ENCODE measurements at regions of chr7 and their contacts with region 1.

Region 1: DNA sequence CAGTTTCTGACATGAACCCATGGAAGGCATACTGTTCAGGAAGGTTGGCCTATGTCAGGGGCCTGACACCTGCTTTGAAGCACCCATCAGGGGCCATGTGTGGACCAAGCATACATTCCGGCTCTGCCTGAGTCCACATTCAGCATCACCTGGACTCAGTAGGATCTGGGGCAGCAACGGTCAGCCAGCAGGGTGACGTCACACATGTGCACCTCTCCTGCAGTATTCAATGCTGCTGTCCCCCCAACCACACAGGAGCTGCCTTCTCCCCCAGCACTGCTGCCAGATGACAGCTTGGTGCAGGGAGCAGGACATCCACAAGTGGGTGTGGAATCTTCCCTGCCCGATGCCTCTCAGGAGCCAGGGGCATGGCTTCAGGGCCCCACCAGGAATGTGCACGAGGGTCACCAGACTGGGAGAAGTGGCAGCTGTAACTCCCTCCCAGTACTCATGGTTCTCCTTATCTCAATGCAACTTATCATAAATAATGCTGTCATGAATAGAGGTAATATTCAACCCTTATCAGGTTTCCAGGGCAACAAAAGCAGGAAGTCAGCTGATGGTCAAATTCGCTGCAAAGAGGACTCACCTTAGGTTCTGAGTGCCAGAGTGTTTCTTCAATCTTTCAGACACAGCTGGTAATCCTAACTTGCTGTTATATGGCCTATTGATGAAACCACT is 292.9 kb downstream of the PAXIP1 start:
- DNase-seq: no peak
- ATAC-seq: no peak
- H3K4me3 Mint-ChIP-seq: no peak overlapping the region
- H3K27ac Mint-ChIP-seq: no peak overlapping the region
- H3K4me1 Mint-ChIP-seq: no peaks in the 10 kb centered on the region
- H3K27me3 Mint-ChIP-seq: no peaks in the 10 kb centered on the region

Region 2: DNA sequence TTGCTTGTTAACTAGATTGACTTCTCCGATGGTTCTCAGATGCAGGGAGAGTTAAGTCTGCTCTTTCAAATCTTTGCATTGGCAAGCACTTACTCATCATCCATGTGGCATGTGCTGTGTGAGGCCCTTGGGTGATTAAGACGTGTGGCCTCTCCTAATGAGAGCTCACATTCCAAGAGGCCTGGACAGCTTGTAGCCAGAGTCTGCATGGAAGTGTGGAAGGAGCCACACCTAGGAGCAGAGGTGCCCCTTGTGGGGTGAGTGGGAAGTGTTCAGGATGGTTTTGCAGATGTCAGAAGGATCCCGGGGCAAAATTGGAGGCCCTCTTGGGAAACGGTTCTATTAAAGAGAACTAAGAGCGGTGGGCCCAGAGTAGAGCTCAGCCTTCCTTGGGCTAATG is 67.0 kb after region 1 on chr7:
- CTCF ChIA-PET with region 1: no interaction called
- POLR2A ChIA-PET with region 1: no interaction called
- intact Hi-C with region 1: no loop called
- DNase-seq: no peak
- ATAC-seq: no peak
- H3K4me3 Mint-ChIP-seq: no peak overlapping the region
- H3K27ac Mint-ChIP-seq: no peak overlapping the region
- H3K4me1 Mint-ChIP-seq: peaks cover 2% of the 10 kb centered on the region
- H3K27me3 Mint-ChIP-seq: no peaks in the 10 kb centered on the region

Region 3: DNA sequence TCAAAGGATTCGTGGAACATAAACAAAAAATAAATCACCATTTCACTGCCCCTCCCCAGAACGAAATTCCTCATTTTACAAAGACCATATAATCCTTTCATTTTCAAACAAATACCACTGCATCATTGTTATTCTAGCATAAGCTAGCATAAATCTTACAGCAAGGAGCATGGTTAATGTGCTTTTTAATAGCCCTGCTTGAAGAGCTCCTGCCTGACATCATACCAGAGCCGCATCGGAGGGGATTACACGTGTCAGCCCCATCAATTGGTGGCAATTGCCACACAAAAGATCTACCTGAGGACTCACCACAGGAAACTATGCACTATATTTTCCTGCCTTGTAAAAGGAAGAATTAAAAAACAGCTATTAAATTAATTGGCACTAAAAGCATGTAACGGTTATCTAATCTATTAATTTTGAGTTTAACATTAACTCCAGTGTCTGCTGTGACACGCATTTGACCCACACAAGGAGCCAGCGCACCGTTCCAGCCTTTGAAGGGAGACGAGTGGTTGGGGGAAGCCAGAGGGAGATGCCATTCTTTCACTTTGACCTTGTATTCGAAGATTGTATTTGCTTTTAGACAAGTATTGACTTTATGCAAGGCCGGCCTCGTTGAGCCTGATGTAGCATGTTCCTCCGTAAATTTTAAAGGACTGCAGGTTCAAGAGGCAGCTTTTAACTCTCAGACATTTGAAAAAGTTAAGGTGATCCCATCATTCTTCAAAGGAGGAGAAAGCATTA is 1669.5 kb after region 1 on chr7:
- CTCF ChIA-PET with region 1: no interaction called
- POLR2A ChIA-PET with region 1: no interaction called
- intact Hi-C with region 1: loop called in 1 of 2 experiments (anchors 5 kb)
- DNase-seq: no peak
- ATAC-seq: no peak
- H3K4me3 Mint-ChIP-seq: no peak overlapping the region
- H3K27ac Mint-ChIP-seq: no peak overlapping the region
- H3K4me1 Mint-ChIP-seq: no peaks in the 10 kb centered on the region
- H3K27me3 Mint-ChIP-seq: peaks cover 17% of the 10 kb centered on the region